PC-9 (cell line): ENCODE measurements at regions of chr12 and their contacts with region 1.

Region 1: GRCh38 chr12:22173177-22173576 is 127.2 kb downstream of the CMAS start:
- DNase-seq: no peak
- H3K4me3 ChIP-seq: no peak overlapping the region
- H3K27ac ChIP-seq: no peak overlapping the region
- H3K4me1 ChIP-seq: no peaks in the 10 kb centered on the region
- H3K27me3 ChIP-seq: no peaks in the 10 kb centered on the region
- CTCF ChIP-seq: no peak; the same call in 1 of the 2 replicates

Region 2: DNA sequence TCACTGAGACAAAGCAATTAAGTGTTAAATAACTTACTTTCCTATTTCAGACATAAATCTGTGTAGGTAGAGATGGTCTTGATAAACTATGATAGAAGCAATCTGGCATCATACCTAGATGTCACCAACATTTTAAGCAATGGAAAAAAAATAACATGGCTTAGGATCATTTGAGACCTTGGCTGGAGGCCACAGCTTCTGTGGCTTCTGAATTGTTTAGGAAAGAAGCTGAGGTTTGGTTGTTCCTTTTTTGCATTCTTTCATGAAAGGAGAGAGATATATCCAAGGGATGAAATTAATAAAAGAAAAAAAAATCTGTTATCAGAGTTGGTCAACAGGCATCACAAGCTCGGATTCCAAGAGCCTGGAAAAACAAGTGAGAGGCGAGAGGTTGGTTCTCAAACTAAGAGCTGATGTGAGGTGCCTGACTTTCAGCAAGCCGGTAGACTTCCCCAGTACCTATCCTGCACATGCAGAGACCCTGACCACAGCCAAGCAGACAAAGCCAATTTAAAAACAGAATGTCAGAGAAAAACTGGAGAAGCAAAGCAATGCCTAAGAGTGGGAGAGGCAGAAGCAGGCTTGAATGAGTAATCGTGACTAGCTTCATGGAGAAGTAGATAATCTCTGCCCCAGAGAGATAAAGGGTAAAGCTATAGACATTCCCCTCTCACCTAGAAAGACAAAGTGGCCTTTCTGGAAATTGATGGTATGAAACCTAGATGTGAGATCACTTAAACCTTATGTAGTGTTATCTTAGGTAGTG is 204.7 kb after region 1 on chr12:
- CTCF ChIA-PET with region 1: interaction called, 11 read pairs
- POLR2A ChIA-PET with region 1: no interaction called
- intact Hi-C with region 1: no loop called
- DNase-seq: peak; percentile 22 to 60
- H3K4me3 ChIP-seq: no peak overlapping the region
- H3K27ac ChIP-seq: peak overlapping the region; percentile 50
- H3K4me1 ChIP-seq: peaks cover 28% of the 10 kb centered on the region
- H3K27me3 ChIP-seq: no peaks in the 10 kb centered on the region
- CTCF ChIP-seq: no peak